Kidney (tissue), 22 donors: ENCODE measurements at regions of chr16 and their contacts with region 1.

Region 1: DNA sequence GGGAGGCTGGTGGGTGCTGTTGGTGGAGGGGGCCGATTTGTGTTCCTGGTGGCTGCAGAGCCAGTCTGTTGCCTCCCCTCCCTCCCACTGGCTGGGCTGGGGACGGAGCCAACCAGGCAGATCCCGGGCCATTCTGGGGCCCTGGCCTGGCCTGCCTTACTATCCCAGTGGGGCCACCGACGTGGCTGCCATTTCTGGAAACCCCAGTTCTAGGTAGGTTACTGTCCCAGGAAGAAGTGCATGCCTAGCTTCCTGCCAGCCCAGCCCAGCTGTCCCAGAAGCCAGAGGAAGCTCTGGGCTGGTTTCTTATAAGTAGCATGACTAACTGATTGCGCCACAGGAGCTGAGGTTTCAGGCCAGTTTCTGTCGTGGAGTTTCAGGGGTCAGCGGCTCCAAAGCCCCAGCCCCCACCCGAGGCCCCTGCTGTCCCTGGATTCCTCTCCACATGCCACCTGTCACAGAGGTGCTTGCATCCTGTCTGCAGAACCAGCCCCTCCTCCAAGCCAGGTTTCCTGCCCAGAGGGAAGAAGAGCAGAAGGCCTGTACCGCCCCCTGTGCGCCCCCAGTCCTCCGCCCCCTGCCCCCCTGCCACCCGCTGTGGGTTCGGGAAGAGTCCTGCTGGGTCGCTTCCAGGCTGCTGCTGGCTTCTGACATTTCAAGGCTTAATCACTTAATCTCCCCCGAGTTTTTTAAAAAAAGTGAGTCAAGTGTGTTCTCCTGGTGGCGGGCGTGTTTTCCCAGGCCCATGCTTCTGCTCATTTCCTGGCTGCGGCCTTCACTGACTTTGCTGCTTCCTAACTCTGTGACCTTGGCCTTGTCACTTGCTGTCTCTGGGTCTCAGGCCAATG is 13.2 kb downstream of the IL4R start:
- DNase-seq: peak; percentile 51 to 95 (median 62)
- H3K4me3 ChIP-seq: no peak overlapping the region
- H3K27ac ChIP-seq: peak overlapping the region; percentile 84 to 90
- H3K4me1 ChIP-seq: peaks cover 0 to 19% (median 0%) of the 10 kb centered on the region in 3 donors
- H3K27me3 ChIP-seq: no peaks in the 10 kb centered on the region
- CTCF ChIP-seq: no peak

Region 2: DNA sequence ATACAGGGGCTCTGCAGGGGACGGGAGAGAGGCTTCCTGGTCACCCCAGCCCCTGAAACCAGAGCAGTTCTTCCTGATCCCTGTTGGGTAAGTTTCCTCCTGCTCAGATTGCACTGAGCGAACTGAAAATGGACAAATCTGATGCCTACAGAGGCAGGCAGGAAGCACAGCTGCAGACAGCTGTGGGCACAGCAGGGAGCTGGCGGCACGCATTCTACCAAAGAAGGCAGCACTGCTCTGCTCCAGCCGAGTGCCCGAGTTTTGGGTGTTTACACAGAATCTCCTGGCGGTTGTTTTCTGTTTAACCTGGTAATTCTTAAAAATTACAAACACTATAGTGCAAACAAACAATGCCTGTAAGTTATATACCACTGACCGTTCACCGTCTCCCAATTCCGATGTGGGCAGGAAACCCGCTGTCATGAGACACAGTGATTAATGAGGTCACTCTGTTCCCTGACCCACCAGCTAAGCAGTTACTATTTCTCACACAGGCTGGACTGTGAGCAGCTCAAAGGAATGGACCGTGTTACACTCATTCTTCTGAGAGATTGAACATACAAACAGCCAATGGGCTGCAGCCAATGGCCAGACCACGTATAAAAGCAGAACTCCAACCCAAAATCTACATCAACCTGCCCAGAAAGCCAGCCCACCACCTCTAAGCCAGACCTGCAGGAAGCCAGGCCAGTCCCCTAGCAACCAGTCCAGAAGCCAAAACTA is 83.9 kb before region 1 on chr16:
- intact Hi-C with region 1: loop called (anchors 10 kb)
- DNase-seq: peak; percentile 69 to 94 (median 82)
- H3K4me3 ChIP-seq: peak overlapping the region; percentile 22 to 47 (median 33)
- H3K27ac ChIP-seq: peak overlapping the region; percentile 60 to 78
- H3K4me1 ChIP-seq: peaks cover 3 to 42% (median 31%) of the 10 kb centered on the region in 3 donors
- H3K27me3 ChIP-seq: no peaks in the 10 kb centered on the region
- CTCF ChIP-seq: no peak